ENCODE measurements at regions of chr10 and their contacts with region 1.

Region 1: GRCh38 chr10:72107325-72108003 is 19.1 kb upstream of the SPOCK2 start:
- DNase-seq: peak in 4 of 14 experiments; percentile 34 to 82 (median 78)
- ATAC-seq: peak; percentile 77
- H3K4me3 ChIP-seq: peak overlapping the region; percentile 12
- H3K4me3 Mint-ChIP-seq: peak overlapping the region; percentile 87
- H3K27ac ChIP-seq: peak overlapping the region; percentile 69 to 74
- H3K27ac Mint-ChIP-seq: peak overlapping the region; percentile 94
- H3K4me1 ChIP-seq: peaks cover 70% of the 10 kb centered on the region
- H3K4me1 Mint-ChIP-seq: peaks cover 92% of the 10 kb centered on the region
- H3K27me3 ChIP-seq: no peaks in the 10 kb centered on the region
- H3K27me3 Mint-ChIP-seq: no peaks in the 10 kb centered on the region
- CTCF ChIP-seq: no peak

Region 2: DNA sequence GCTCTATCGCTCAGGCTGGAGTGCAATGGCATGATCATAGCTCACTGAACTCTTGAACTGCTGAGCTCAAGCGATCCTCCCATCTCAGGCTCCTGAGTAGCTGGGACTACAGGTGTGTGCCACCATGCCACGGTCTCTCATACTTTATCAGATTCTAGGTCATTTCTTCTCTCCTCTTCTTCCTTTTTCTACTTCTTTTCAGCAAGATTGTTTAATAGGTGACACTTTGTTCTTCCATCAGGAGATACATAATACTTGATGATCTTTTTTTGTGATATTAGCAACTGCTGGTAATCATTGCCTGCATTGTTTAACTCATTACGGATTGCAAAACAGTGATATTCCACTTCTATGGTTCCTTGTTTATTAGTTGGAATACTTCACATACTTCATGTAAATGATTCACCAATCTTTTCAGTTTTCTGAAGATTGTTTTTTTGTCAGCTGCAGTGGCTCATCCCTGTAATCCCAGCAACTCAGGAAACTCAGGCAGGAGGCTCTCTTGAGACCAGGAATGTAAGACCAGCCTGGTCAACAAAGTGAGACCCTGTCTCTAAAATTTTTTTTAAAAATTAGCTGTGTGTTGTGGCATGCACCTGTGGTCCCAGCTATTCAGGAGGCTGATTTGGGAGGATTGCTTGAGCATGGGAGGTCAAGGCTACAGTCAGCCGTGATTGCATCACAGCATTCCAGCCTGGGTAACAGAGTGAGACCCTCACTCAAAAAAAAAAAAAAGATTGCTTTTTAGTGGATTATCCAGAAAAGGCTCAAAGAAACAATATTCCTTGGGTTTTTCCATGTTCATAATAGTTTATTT is 179.5 kb before region 1 on chr10:
- CTCF ChIA-PET with region 1: no interaction called
- POLR2A ChIA-PET with region 1: no interaction called
- intact Hi-C with region 1: no loop called
- DNase-seq: no peak
- ATAC-seq: no peak
- H3K4me3 ChIP-seq: no peak overlapping the region
- H3K4me3 Mint-ChIP-seq: no peak overlapping the region
- H3K27ac ChIP-seq: no peak overlapping the region
- H3K27ac Mint-ChIP-seq: no peak overlapping the region
- H3K4me1 ChIP-seq: peaks cover 1% of the 10 kb centered on the region
- H3K4me1 Mint-ChIP-seq: peaks cover 8% of the 10 kb centered on the region
- H3K27me3 ChIP-seq: no peaks in the 10 kb centered on the region
- H3K27me3 Mint-ChIP-seq: no peaks in the 10 kb centered on the region
- CTCF ChIP-seq: no peak

Region 3: GRCh38 chr10:72126184-72126871 is 18.9 kb after region 1 on chr10:
- CTCF ChIA-PET with region 1: interaction called, 3 read pairs
- POLR2A ChIA-PET with region 1: interaction called, 12 read pairs
- intact Hi-C with region 1: loop called in 1 of 2 experiments (anchors 2 kb)
- DNase-seq: peak in 3 of 14 experiments; percentile 53 to 60 (median 58)
- ATAC-seq: peak; percentile 26
- H3K4me3 ChIP-seq: no peak overlapping the region
- H3K4me3 Mint-ChIP-seq: no peak overlapping the region
- H3K27ac ChIP-seq: no peak overlapping the region
- H3K27ac Mint-ChIP-seq: peak overlapping the region; percentile 43
- H3K4me1 ChIP-seq: peaks cover 11% of the 10 kb centered on the region
- H3K4me1 Mint-ChIP-seq: peaks cover 58% of the 10 kb centered on the region
- H3K27me3 ChIP-seq: no peaks in the 10 kb centered on the region
- H3K27me3 Mint-ChIP-seq: no peaks in the 10 kb centered on the region
- CTCF ChIP-seq: peak; percentile 42